CD4-positive, alpha-beta memory T cell (primary cell): ENCODE measurements at regions of chr6 and their contacts with region 1.

Region 1: GRCh38 chr6:31396422-31397152 is 6.8 kb upstream of the MICA start:
- DNase-seq: peak; percentile 80 to 85 (median 83)
- H3K4me3 ChIP-seq: no peak overlapping the region
- H3K4me3 Mint-ChIP-seq: peak overlapping the region in 7 of 8 donors; percentile 6 to 82 (median 58)
- H3K27ac ChIP-seq: no peak overlapping the region
- H3K27ac Mint-ChIP-seq: peak overlapping the region in 5 of 7 donors; percentile 54 to 89 (median 68)
- H3K4me1 ChIP-seq: peaks cover 32% of the 10 kb centered on the region
- H3K4me1 Mint-ChIP-seq: peaks cover 22 to 46% (median 33%) of the 10 kb centered on the region in 4 donors
- H3K27me3 ChIP-seq: no peaks in the 10 kb centered on the region
- H3K27me3 Mint-ChIP-seq: no peaks in the 10 kb centered on the region

Region 2: GRCh38 chr6:31385041-31385440 is 11.5 kb before region 1 on chr6:
- CTCF ChIA-PET with region 1: no interaction called
- POLR2A ChIA-PET with region 1: no interaction called
- intact Hi-C with region 1: no loop called
- DNase-seq: no peak
- H3K4me3 ChIP-seq: no peak overlapping the region
- H3K4me3 Mint-ChIP-seq: no peak overlapping the region
- H3K27ac ChIP-seq: no peak overlapping the region
- H3K27ac Mint-ChIP-seq: no peak overlapping the region
- H3K4me1 ChIP-seq: no peaks in the 10 kb centered on the region
- H3K4me1 Mint-ChIP-seq: no peaks in the 10 kb centered on the region
- H3K27me3 ChIP-seq: peaks cover 2% of the 10 kb centered on the region
- H3K27me3 Mint-ChIP-seq: peaks cover 2% of the 10 kb centered on the region in 2 donors

Region 3: DNA sequence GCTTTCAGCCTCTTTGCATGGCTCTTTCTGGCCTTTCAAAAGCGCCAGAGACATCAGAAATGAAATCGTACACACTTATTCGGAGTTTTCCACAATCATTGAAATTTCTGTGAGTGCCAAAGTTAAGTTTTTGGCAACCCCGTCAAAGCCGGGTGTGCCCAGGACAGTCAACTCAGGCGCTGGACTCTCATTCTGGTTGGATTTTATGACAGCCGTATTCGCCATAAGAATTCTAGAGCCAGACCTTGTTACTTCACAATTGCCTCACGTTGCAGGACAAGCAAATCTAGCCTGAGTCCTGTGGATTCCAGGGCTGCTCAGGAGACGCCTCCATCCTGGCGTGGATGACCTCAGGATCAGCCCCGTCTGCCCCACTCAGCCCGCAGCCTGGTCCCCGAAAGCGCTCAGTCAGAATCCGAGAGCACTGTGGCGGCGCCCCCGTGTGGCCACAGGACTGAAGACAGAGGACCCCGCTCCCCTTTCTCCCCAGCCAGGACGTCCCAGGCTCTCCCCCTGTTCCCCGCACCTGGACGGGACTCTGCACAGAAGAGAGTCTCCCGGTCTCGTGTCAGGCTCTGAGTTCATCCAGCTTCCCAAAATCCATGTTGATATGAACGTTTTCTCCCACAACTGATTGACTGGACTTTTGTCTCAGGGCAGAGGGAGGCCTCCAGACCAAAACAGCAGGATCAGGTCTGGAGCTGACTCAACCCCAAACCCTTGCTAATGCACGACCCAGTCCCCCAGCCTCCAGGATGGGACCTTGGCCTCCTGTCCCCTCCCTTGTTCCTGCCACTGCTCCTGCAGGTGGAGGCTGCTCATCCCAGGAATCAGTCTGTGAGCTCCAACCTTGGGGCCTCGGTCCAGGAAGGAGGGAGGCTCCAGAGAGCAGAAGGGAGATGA is 45.0 kb after region 1 on chr6:
- CTCF ChIA-PET with region 1: interaction called, 131 read pairs
- POLR2A ChIA-PET with region 1: interaction called, 16 read pairs
- intact Hi-C with region 1: loop called (anchors 1 kb)
- DNase-seq: peak; percentile 68 to 78 (median 75)
- H3K4me3 ChIP-seq: no peak overlapping the region
- H3K4me3 Mint-ChIP-seq: peak overlapping the region in 1 of 8 donors; percentile 33
- H3K27ac ChIP-seq: no peak overlapping the region
- H3K27ac Mint-ChIP-seq: peak overlapping the region in 2 of 7 donors; percentile 42 to 48
- H3K4me1 ChIP-seq: peaks cover 7% of the 10 kb centered on the region
- H3K4me1 Mint-ChIP-seq: peaks cover 0 to 8% (median under 1%) of the 10 kb centered on the region in 4 donors
- H3K27me3 ChIP-seq: peaks cover under 1% of the 10 kb centered on the region
- H3K27me3 Mint-ChIP-seq: peaks cover 25 to 27% of the 10 kb centered on the region in 2 donors